ENCODE measurements at regions of chr15 and their contacts with region 1.

Region 1: GRCh38 chr15:86813907-86814306 is 734.2 kb downstream of the AGBL1 start:
- DNase-seq: no peak
- H3K4me3 ChIP-seq: no peak overlapping the region
- H3K27ac ChIP-seq: no peak overlapping the region
- H3K4me1 ChIP-seq: no peaks in the 10 kb centered on the region
- CTCF ChIP-seq: no peak

Region 2: DNA sequence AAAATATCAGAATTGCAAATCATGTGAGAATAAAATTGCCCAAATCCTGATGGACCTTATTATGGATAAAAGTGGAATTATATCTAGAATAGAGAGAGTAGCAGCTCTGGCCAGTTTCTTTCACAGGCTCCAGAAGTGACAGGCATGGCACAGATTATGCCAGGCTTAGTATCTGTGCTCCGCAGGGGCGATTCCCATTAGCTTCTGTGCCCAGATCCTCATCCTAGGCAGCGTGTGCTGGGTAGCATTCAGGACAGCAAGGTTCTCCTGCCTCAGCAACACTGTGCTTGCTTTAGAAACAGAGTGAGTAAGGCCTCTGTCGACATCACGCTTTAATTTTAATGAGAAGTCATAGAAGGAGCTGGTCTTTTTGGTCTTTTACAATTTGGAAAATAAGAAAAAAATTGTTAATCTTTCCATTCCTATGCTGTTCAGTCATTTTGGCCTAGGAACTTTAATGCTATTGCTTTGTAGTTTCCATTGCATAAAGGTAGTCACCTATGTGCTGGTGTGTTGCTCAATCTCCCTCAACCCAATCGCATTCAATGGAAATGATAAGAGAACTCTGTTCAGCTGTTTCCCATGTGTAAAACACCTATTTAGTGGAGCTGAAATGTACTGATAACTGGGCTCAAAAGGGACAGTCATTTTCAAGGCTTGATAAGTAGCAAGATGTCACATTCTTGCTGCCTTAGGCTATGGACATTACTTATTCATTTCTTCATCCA is 35.8 kb after region 1 on chr15:
- CTCF ChIA-PET with region 1: no interaction called
- POLR2A ChIA-PET with region 1: no interaction called
- intact Hi-C with region 1: loop called (anchors 2 kb)
- DNase-seq: no peak
- H3K4me3 ChIP-seq: no peak overlapping the region
- H3K27ac ChIP-seq: no peak overlapping the region
- H3K4me1 ChIP-seq: no peaks in the 10 kb centered on the region
- CTCF ChIP-seq: no peak

Region 3: GRCh38 chr15:86877171-86877646 is 63.3 kb after region 1 on chr15:
- CTCF ChIA-PET with region 1: no interaction called
- POLR2A ChIA-PET with region 1: no interaction called
- intact Hi-C with region 1: no loop called
- DNase-seq: no peak
- H3K4me3 ChIP-seq: no peak overlapping the region
- H3K27ac ChIP-seq: no peak overlapping the region
- H3K4me1 ChIP-seq: no peaks in the 10 kb centered on the region
- CTCF ChIP-seq: no peak

Region 4: GRCh38 chr15:86973376-86973775 is 159.5 kb after region 1 on chr15:
- CTCF ChIA-PET with region 1: no interaction called
- POLR2A ChIA-PET with region 1: no interaction called
- intact Hi-C with region 1: no loop called
- DNase-seq: no peak
- H3K4me3 ChIP-seq: no peak overlapping the region
- H3K27ac ChIP-seq: no peak overlapping the region
- H3K4me1 ChIP-seq: no peaks in the 10 kb centered on the region
- CTCF ChIP-seq: no peak

Measured in OCI-LY7 (cell line).